MCF 10A (cell line): ENCODE measurements at regions of chr3 and their contacts with region 1.

Region 1: GRCh38 chr3:47380601-47381316 is at the start of gene PTPN23:
- DNase-seq: peak; percentile 99
- H3K4me3 Mint-ChIP-seq: peak within 1 kb of the TSS; percentile 97
- H3K27ac Mint-ChIP-seq: peak within 1 kb of the TSS; percentile 99
- H3K4me1 Mint-ChIP-seq: peaks cover 31% of the 10 kb centered on the region
- H3K27me3 Mint-ChIP-seq: no peaks in the 10 kb centered on the region
- CTCF ChIP-seq: no peak
- total RNA-seq, gene PTPN23: 44.5 and 46.9 TPM in 2 replicates

Region 2: GRCh38 chr3:47016934-47017435 is 363.8 kb before region 1 on chr3:
- CTCF ChIA-PET with region 1: no interaction called
- POLR2A ChIA-PET with region 1: no interaction called
- intact Hi-C with region 1: no loop called
- DNase-seq: peak; percentile 36
- H3K4me3 Mint-ChIP-seq: no peak overlapping the region
- H3K27ac Mint-ChIP-seq: no peak overlapping the region
- H3K4me1 Mint-ChIP-seq: peaks cover 9% of the 10 kb centered on the region
- H3K27me3 Mint-ChIP-seq: no peaks in the 10 kb centered on the region
- CTCF ChIP-seq: no peak

Region 3: DNA sequence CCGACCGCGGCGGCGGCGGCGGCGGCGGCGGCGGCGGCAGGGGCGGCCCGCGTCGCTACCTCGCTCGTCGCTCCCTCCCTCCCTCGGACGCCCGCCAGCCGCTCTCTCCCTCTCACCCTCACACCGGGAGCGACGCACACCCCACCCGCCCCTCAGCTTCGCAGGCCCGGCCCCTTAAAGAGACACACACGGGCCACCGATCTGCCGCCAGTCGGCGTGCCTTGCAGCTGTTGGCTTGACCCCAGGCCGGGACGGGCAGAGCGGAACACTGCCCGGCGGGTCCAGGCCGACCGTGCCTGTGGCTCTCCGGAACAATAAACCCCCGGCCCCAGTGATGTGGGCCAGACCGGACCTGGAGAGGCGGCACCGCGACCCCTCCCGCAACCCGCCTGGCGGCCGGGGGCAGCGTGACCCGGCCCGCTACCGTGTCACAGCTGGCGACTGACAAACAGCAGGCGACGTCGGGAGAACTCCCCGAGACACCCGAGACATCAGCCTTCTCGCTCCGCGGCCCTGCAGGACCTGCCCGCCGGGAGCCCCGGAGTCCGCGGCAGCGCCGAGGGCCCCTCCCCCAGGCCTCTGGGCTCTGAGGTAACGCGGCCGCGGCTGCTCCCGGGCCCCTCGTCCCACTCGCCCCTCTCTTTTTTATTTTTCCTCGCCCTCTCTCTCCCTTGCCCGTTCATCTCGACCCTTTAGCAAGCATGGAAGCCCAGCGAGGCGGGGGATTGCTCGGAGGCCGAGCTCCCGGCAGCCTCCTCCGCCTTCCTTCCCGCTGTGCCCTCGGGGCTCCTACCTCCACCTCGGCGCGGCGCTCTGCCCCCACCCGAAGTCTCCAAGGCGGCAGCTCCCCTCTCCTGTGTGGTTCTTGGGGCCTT is 216.5 kb before region 1 on chr3 and contains the start of gene SETD2:
- CTCF ChIA-PET with region 1: no interaction called
- POLR2A ChIA-PET with region 1: interaction called, 13 read pairs
- intact Hi-C with region 1: no loop called
- DNase-seq: peak; percentile 95
- H3K4me3 Mint-ChIP-seq: peak within 1 kb of the TSS; percentile 81
- H3K27ac Mint-ChIP-seq: peak within 1 kb of the TSS; percentile 87
- H3K4me1 Mint-ChIP-seq: peaks cover 27% of the 10 kb centered on the region
- H3K27me3 Mint-ChIP-seq: no peaks in the 10 kb centered on the region
- CTCF ChIP-seq: no peak
- total RNA-seq, gene SETD2: 35.8 and 38.0 TPM in 2 replicates

Region 4: GRCh38 chr3:47365213-47366153 is 15.3 kb before region 1 on chr3:
- CTCF ChIA-PET with region 1: interaction called, 3 read pairs
- POLR2A ChIA-PET with region 1: interaction called, 5 read pairs
- intact Hi-C with region 1: loop called (anchors 1 kb)
- DNase-seq: peak; percentile 83
- H3K4me3 Mint-ChIP-seq: no peak overlapping the region
- H3K27ac Mint-ChIP-seq: no peak overlapping the region
- H3K4me1 Mint-ChIP-seq: peaks cover 7% of the 10 kb centered on the region
- H3K27me3 Mint-ChIP-seq: peaks cover 12% of the 10 kb centered on the region
- CTCF ChIP-seq: no peak

Region 5: GRCh38 chr3:47420511-47421484 is 40.0 kb after region 1 on chr3:
- CTCF ChIA-PET with region 1: no interaction called
- POLR2A ChIA-PET with region 1: interaction called, 11 read pairs
- intact Hi-C with region 1: no loop called
- DNase-seq: peak; percentile 91
- H3K4me3 Mint-ChIP-seq: no peak overlapping the region
- H3K27ac Mint-ChIP-seq: no peak overlapping the region
- H3K4me1 Mint-ChIP-seq: no peaks in the 10 kb centered on the region
- H3K27me3 Mint-ChIP-seq: no peaks in the 10 kb centered on the region
- CTCF ChIP-seq: peak; percentile 88

Region 6: GRCh38 chr3:47802734-47803477 is 422.1 kb after region 1 on chr3 and contains the start of gene DHX30:
- CTCF ChIA-PET with region 1: no interaction called
- POLR2A ChIA-PET with region 1: interaction called, 11 read pairs
- intact Hi-C with region 1: no loop called
- DNase-seq: peak; percentile 80
- H3K4me3 Mint-ChIP-seq: peak within 1 kb of the TSS; percentile 94
- H3K27ac Mint-ChIP-seq: peak within 1 kb of the TSS; percentile 97
- H3K4me1 Mint-ChIP-seq: peaks cover 12% of the 10 kb centered on the region
- H3K27me3 Mint-ChIP-seq: no peaks in the 10 kb centered on the region
- CTCF ChIP-seq: no peak
- total RNA-seq, gene DHX30: 80.5 and 86.2 TPM in 2 replicates